Right ventricle myocardium superior (tissue), 1 donor: ENCODE measurements at regions of chr7 and their contacts with region 1.

Region 1: GRCh38 chr7:25069900-25070443 is 55.1 kb downstream of the CYCS start:
- DNase-seq: no peak
- ATAC-seq: peak; percentile 80

Region 2: DNA sequence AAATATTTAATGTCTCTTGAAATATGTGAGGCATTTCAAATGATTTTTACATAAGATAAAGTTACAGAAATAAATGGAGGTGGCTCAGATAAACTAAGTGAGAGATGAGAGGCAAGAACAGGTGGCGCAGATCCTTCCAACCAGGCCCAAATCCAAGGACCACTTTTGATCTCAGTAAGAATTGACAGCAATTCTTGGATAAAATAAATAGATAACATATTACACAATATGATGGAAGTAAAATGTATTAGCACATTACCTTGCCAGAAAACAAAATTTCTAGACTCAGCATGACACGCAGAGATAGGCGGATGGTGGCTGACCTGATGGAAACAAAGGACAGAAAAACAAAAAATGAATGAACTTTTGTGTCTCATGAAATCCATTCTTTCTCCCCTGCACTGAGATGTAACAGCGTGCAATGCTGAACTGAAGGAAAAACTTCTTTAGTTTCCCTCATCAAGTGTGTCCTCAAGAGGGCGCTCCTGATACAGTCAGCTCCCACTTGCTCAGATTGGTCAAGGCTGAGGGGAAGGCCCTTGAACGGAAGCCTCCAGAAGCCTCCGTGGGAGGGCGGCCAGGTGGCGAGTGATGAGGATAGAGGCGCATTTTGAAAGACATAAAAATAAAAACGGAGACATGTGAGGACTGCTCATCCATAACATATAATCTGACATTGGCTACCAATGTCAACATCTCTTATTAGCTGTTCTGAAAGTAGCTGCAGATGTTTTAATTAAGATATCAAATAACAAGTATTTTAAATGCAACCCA is 249.9 kb before region 1 on chr7:
- intact Hi-C with region 1: loop called (anchors 5 kb)
- DNase-seq: peak; percentile 81
- ATAC-seq: peak; percentile 94

Region 3: DNA sequence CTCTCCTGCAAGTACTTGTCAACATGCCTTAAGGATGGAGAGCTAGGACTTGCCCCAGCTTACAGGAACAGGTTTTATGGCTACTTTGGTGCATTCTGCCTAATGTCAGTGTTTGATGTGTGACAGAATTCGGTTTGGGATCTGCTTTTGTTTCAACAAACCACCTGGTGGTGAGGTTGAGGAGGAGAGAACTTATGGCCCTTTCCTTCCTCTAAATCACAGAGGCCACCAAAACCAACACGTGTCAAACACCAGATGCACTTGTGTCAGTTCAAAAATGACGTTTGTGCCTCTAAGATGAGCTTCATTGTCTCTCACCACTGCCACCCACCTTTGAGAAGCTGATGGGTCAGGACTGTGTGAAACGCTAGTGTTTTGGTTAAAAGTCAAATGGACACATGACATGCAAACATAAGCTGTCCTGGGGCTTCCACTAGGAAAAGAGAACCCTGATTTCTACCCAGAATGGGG is 173.9 kb before region 1 on chr7:
- intact Hi-C with region 1: loop called (anchors 5 kb)
- DNase-seq: no peak
- ATAC-seq: no peak